H1 (cell line): ENCODE measurements at regions of chr15 and their contacts with region 1.

Region 1: DNA sequence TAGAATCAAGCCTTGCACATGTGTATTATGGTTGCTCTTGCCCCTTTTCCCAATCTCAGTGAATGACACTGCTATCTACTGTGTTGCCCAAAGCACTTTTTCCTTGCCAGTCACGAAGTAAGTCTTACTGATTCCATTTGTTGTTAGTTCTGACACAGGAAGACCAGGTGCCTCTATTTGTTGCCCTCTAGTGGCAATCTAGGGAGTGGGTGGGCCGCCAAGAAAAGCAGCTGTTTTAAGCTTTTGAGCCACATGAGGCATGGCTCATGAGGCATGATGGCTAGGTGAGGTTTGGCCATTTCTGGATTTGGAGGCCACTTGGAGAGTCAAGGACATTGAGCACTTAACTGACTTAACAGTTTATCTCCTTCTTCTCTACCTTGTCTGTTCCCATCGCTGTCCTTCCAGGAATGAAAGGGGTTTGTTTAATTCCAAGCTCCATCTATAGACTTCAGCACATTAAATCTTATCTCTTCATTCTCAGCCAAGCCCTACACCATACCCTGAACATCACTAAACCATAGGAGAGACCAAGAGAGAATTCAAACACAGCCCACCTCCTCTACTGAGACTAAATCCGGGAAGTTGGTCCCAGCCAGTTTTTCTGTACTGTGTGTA is 103.1 kb downstream of the HCN4 start:
- DNase-seq: peak in 1 of 2 experiments; percentile 76
- H3K4me3 ChIP-seq: no peak overlapping the region
- H3K27ac ChIP-seq: no peak overlapping the region
- H3K4me1 ChIP-seq: no peaks in the 10 kb centered on the region
- H3K27me3 ChIP-seq: no peaks in the 10 kb centered on the region
- CTCF ChIP-seq: peak; percentile 69 to 96 (median 93)
- EP300 ChIP-seq: no peak
- POLR2A ChIP-seq: no peak
- RAD21 ChIP-seq: peak; percentile 61 to 69

Region 2: GRCh38 chr15:73240866-73241499 is 24.7 kb before region 1 on chr15:
- CTCF ChIA-PET with region 1: interaction called, 52 read pairs
- POLR2A ChIA-PET with region 1: interaction called, 4 read pairs
- DNase-seq: peak in 1 of 2 experiments; percentile 89
- H3K4me3 ChIP-seq: no peak overlapping the region
- H3K27ac ChIP-seq: no peak overlapping the region
- H3K4me1 ChIP-seq: no peaks in the 10 kb centered on the region
- H3K27me3 ChIP-seq: no peaks in the 10 kb centered on the region
- CTCF ChIP-seq: peak in 2 of 3 experiments; percentile 81 to 87; a peak in 3 of 4 replicates
- EP300 ChIP-seq: no peak
- POLR2A ChIP-seq: no peak
- RAD21 ChIP-seq: peak; percentile 66 to 74

Region 3: DNA sequence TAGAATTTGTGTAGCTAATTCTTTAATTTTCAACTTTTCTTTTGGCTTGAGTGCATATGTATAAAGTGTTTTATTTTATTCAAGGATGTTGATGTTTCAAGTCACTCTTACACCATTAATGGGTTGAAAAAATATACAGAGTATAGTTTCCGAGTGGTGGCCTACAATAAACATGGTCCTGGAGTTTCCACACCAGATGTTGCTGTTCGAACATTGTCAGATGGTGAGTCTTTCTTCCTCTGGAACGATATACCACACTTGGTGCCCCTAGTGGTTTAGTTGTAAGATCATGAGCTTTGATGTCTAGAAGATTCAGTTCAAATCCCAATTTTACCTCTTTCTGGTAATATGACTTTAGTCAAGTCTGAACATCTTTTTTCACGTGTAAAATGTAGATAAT is 16.1 kb before region 1 on chr15:
- CTCF ChIA-PET with region 1: interaction called, 52 read pairs
- POLR2A ChIA-PET with region 1: no interaction called
- DNase-seq: no peak
- H3K4me3 ChIP-seq: no peak overlapping the region
- H3K27ac ChIP-seq: no peak overlapping the region
- H3K4me1 ChIP-seq: no peaks in the 10 kb centered on the region
- H3K27me3 ChIP-seq: no peaks in the 10 kb centered on the region
- CTCF ChIP-seq: no peak
- EP300 ChIP-seq: no peak
- POLR2A ChIP-seq: no peak
- RAD21 ChIP-seq: no peak

Region 4: GRCh38 chr15:73254598-73254997 is 11.0 kb before region 1 on chr15:
- CTCF ChIA-PET with region 1: interaction called, 31 read pairs
- POLR2A ChIA-PET with region 1: no interaction called
- DNase-seq: no peak
- H3K4me3 ChIP-seq: no peak overlapping the region
- H3K27ac ChIP-seq: no peak overlapping the region
- H3K4me1 ChIP-seq: no peaks in the 10 kb centered on the region
- H3K27me3 ChIP-seq: no peaks in the 10 kb centered on the region
- CTCF ChIP-seq: no peak
- EP300 ChIP-seq: no peak
- POLR2A ChIP-seq: no peak
- RAD21 ChIP-seq: no peak